Activated CD8-positive, alpha-beta T cell treated with anti-CD3 and anti-CD28 coated beads for 36 hours (primary cell): ENCODE measurements at regions of chr7 and their contacts with region 1.

Region 1: GRCh38 chr7:18352339-18353255 is 143.0 kb upstream of the HDAC9 start:
- DNase-seq: peak; percentile 46
- ATAC-seq: peak; percentile 34
- H3K4me3 Mint-ChIP-seq: no peak overlapping the region
- H3K27ac Mint-ChIP-seq: no peak overlapping the region
- H3K4me1 Mint-ChIP-seq: peaks cover 6% of the 10 kb centered on the region
- H3K27me3 Mint-ChIP-seq: peaks cover 1% of the 10 kb centered on the region
- CTCF ChIP-seq: peak; percentile 67

Region 2: GRCh38 chr7:18257711-18258110 is 94.9 kb before region 1 on chr7:
- CTCF ChIA-PET with region 1: no interaction called
- POLR2A ChIA-PET with region 1: no interaction called
- intact Hi-C with region 1: no loop called
- DNase-seq: no peak
- ATAC-seq: no peak
- H3K4me3 Mint-ChIP-seq: no peak overlapping the region
- H3K27ac Mint-ChIP-seq: no peak overlapping the region
- H3K4me1 Mint-ChIP-seq: no peaks in the 10 kb centered on the region
- H3K27me3 Mint-ChIP-seq: no peaks in the 10 kb centered on the region
- CTCF ChIP-seq: no peak

Region 3: GRCh38 chr7:18288322-18289037 is 64.1 kb before region 1 on chr7:
- CTCF ChIA-PET with region 1: no interaction called
- POLR2A ChIA-PET with region 1: no interaction called
- intact Hi-C with region 1: no loop called
- DNase-seq: no peak
- ATAC-seq: no peak
- H3K4me3 Mint-ChIP-seq: no peak overlapping the region
- H3K27ac Mint-ChIP-seq: no peak overlapping the region
- H3K4me1 Mint-ChIP-seq: peaks cover 14% of the 10 kb centered on the region
- H3K27me3 Mint-ChIP-seq: peaks cover 10% of the 10 kb centered on the region
- CTCF ChIP-seq: no peak

Region 4: DNA sequence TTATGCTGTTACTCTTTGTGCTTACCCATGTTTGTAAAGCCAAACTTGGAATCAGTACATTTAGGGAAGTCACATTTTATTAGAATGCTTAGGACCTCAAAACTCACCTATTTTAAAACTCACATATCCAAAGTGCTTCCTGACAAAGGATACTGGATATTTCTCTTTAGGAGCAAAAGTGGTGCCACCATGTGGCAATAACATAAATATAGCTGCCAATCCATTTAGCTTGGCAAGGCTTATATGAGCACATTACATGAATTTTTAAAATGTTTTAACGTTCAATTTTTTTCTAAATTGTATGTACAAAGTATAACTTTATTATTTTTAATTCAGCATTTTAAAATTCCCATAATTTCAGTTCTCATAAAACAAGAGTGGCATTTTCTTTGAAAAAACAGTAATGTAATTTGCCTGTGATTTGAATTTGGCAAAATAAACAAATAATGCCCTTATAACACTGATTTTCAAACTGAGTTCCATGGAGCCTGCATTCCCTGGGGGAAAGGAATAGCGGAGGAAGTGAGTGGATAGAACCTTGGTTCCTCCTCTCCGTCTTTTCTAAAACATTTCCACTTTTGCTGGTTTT is 218.4 kb after region 1 on chr7:
- CTCF ChIA-PET with region 1: interaction called, 6 read pairs
- POLR2A ChIA-PET with region 1: no interaction called
- intact Hi-C with region 1: loop called (anchors 10 kb)
- DNase-seq: no peak
- ATAC-seq: no peak
- H3K4me3 Mint-ChIP-seq: no peak overlapping the region
- H3K27ac Mint-ChIP-seq: no peak overlapping the region
- H3K4me1 Mint-ChIP-seq: no peaks in the 10 kb centered on the region
- H3K27me3 Mint-ChIP-seq: no peaks in the 10 kb centered on the region
- CTCF ChIP-seq: no peak

Region 5: GRCh38 chr7:18666107-18666728 is 313.6 kb after region 1 on chr7:
- CTCF ChIA-PET with region 1: interaction called, 29 read pairs
- POLR2A ChIA-PET with region 1: no interaction called
- intact Hi-C with region 1: loop called (anchors 5 kb)
- DNase-seq: peak; percentile 83
- ATAC-seq: peak; percentile 78
- H3K4me3 Mint-ChIP-seq: no peak overlapping the region
- H3K27ac Mint-ChIP-seq: no peak overlapping the region
- H3K4me1 Mint-ChIP-seq: no peaks in the 10 kb centered on the region
- H3K27me3 Mint-ChIP-seq: no peaks in the 10 kb centered on the region
- CTCF ChIP-seq: peak; percentile 90

Region 6: DNA sequence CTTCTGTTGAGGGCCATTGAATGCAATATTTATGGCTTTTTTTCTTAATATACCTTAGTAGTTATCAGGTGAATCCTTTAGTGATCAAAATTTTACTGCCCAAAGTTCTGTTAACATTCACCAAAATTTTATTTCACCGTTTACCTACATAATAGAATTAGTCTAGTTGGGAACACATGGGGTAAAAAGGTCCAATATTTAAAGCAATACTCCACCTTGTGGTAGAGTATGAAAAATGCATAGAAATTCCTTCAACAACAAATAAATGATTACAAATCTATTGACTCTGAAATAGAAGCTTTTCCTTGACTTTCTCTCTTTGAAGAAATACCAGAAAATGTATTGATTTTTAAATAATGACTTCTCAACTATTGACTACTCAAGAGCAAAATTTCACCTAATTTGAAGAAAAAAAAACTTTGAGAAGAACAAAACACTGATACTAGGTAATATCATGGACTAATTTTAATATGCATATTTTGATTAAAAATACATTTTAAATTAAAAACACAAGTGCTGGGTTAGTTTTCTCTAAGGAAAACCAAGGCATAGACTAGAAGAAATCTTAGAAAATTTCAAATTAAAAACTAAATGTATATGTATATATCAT is 1312.9 kb after region 1 on chr7:
- CTCF ChIA-PET with region 1: interaction called, 8 read pairs
- POLR2A ChIA-PET with region 1: no interaction called
- intact Hi-C with region 1: loop called (anchors 10 kb)
- DNase-seq: no peak
- ATAC-seq: no peak
- H3K4me3 Mint-ChIP-seq: no peak overlapping the region
- H3K27ac Mint-ChIP-seq: no peak overlapping the region
- H3K4me1 Mint-ChIP-seq: peaks cover 12% of the 10 kb centered on the region
- H3K27me3 Mint-ChIP-seq: peaks cover 2% of the 10 kb centered on the region
- CTCF ChIP-seq: peak; percentile 66